ENCODE measurements at regions of chr2 and their contacts with region 1.

Region 1: GRCh38 chr2:229921892-229922445 is at the start of gene TRIP12:
- DNase-seq: peak; percentile 87 to 97 (median 95)
- ATAC-seq: peak; percentile 88
- H3K4me3 ChIP-seq: peak within 1 kb of the TSS; percentile 99
- H3K4me3 Mint-ChIP-seq: peak within 1 kb of the TSS; percentile 85 to 99 (median 96)
- H3K27ac ChIP-seq: peak within 1 kb of the TSS; percentile 98
- H3K27ac Mint-ChIP-seq: peak within 1 kb of the TSS; percentile 93 to 100 (median 98)
- H3K4me1 ChIP-seq: peaks cover 18 to 35% of the 10 kb centered on the region in 2 donors
- H3K4me1 Mint-ChIP-seq: peaks cover 30 to 62% (median 49%) of the 10 kb centered on the region in 7 donors
- H3K27me3 ChIP-seq: no peaks in the 10 kb centered on the region
- H3K27me3 Mint-ChIP-seq: no peaks in the 10 kb centered on the region
- total RNA-seq, gene TRIP12: 184 to 247 (median 231) TPM

Region 2: DNA sequence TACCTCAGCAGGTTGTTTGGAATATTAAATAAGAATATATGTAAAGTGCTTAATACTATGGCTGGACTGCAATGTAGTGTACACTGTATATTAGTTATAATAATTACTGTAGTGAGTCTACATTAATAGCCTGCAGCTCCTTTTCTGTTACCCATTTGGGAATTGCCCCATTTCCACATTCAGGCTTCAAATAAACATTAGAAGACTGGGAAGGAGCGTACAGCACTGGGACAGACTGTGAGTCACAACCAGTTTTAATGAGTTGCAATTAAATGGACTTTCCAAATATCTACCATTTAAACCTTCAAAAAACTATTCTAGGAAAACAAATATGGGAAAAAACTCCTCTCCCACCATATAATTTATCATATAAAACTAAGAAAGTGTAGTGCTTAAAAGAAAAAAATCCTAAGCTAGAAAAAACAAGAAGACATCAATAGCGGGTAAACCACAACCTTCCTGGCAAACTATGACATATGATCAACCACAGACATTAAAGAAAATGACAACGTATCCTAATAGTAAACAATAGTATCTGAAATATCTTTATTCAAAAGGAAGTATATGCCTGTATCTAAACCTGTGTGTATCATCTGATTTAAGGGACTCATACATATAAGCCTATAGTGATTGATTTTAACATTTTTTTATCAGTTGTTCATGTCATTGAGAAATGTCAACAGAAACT is 86.2 kb before region 1 on chr2:
- CTCF ChIA-PET with region 1: no interaction called
- POLR2A ChIA-PET with region 1: interaction called, 13 read pairs
- intact Hi-C with region 1: no loop called
- DNase-seq: peak in 7 of 9 donors; percentile 47 to 83 (median 75)
- ATAC-seq: peak; percentile 92
- H3K4me3 ChIP-seq: peak overlapping the region; percentile 17
- H3K4me3 Mint-ChIP-seq: peak overlapping the region; percentile 39 to 79 (median 68)
- H3K27ac ChIP-seq: peak overlapping the region; percentile 21
- H3K27ac Mint-ChIP-seq: peak overlapping the region; percentile 2 to 97 (median 90)
- H3K4me1 ChIP-seq: peaks cover 18 to 45% of the 10 kb centered on the region in 2 donors
- H3K4me1 Mint-ChIP-seq: peaks cover 23 to 84% (median 78%) of the 10 kb centered on the region in 7 donors
- H3K27me3 ChIP-seq: no peaks in the 10 kb centered on the region
- H3K27me3 Mint-ChIP-seq: no peaks in the 10 kb centered on the region

Region 3: DNA sequence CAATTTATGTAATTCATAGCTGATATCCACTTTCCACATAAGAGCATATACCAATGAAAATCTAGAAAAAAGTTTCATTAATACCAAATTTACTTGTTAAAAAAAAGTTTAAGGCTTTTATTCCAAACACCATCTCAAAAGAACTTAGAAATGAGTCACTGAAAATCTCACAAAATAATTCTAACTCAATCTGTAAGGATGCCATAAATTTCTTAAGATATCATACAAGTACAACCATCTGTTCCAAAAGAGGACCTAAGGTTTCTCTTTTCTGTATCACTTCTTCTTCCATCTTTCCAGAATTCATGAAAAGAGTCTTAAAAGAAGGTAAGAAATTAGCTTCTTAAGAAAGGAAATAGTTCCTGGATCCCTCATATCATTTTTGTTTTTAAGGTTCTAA is 60.5 kb before region 1 on chr2:
- CTCF ChIA-PET with region 1: no interaction called
- POLR2A ChIA-PET with region 1: no interaction called
- intact Hi-C with region 1: no loop called
- DNase-seq: no peak
- ATAC-seq: no peak
- H3K4me3 ChIP-seq: no peak overlapping the region
- H3K4me3 Mint-ChIP-seq: no peak overlapping the region
- H3K27ac ChIP-seq: no peak overlapping the region
- H3K27ac Mint-ChIP-seq: peak overlapping the region in 8 of 9 donors; percentile 5 to 93 (median 62)
- H3K4me1 ChIP-seq: peaks cover 7 to 12% of the 10 kb centered on the region in 2 donors
- H3K4me1 Mint-ChIP-seq: peaks cover 16 to 76% (median 65%) of the 10 kb centered on the region in 7 donors
- H3K27me3 ChIP-seq: no peaks in the 10 kb centered on the region
- H3K27me3 Mint-ChIP-seq: no peaks in the 10 kb centered on the region

Region 4: DNA sequence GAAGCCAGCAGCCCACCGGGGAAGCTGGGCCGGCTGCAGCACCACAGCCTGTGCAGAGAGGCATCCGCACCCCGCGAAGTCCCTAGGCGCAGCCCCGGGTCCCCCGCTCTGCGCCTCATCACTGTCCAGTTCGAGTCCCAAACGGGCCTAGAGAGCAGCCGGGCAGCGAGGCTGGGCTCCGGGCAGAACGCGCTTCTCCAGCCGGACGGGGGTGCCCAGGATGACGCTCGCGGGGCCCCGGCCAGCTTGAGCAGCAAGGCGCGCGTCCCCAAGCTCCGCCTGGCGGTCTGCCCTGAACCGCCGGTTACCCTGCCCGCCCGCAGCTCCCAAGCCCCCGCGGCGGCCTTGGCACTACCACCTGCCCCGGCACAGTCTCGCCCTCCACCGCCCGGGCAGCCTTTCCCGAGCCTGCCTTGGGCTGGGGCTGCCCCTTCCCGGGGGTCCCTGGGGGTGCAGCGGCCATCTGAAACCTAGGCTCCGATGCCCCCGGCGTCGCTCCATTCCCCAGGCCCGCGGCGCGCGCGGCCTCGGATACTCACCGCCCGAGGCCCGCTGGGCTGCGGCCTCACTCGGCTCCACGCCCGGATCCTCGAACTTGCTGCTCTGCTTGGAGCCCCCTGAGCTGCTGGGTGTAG is 146.2 kb after region 1 on chr2:
- CTCF ChIA-PET with region 1: no interaction called
- POLR2A ChIA-PET with region 1: no interaction called
- intact Hi-C with region 1: loop called in 1 of 2 experiments (anchors 2 kb)
- DNase-seq: peak; percentile 16 to 62 (median 38)
- ATAC-seq: peak; percentile 40
- H3K4me3 ChIP-seq: peak overlapping the region; percentile 62
- H3K4me3 Mint-ChIP-seq: peak overlapping the region; percentile 81 to 96 (median 90)
- H3K27ac ChIP-seq: no peak overlapping the region
- H3K27ac Mint-ChIP-seq: peak overlapping the region in 3 of 9 donors; percentile 69 to 80 (median 74)
- H3K4me1 ChIP-seq: peaks cover 0 to 7% of the 10 kb centered on the region in 2 donors
- H3K4me1 Mint-ChIP-seq: peaks cover 8 to 18% (median 12%) of the 10 kb centered on the region in 7 donors
- H3K27me3 ChIP-seq: no peaks in the 10 kb centered on the region
- H3K27me3 Mint-ChIP-seq: peaks cover 4 to 32% (median 5%) of the 10 kb centered on the region in 5 donors

Region 5: GRCh38 chr2:230602562-230603230 is 680.7 kb after region 1 on chr2:
- CTCF ChIA-PET with region 1: no interaction called
- POLR2A ChIA-PET with region 1: no interaction called
- intact Hi-C with region 1: loop called in 1 of 2 experiments (anchors 5 kb)
- DNase-seq: peak in 7 of 9 donors; percentile 51 to 79 (median 74)
- ATAC-seq: peak; percentile 90
- H3K4me3 ChIP-seq: peak overlapping the region; percentile 14
- H3K4me3 Mint-ChIP-seq: peak overlapping the region; percentile 66 to 90 (median 78)
- H3K27ac ChIP-seq: peak overlapping the region; percentile 64
- H3K27ac Mint-ChIP-seq: peak overlapping the region; percentile 93 to 99 (median 98)
- H3K4me1 ChIP-seq: peaks cover 35 to 38% of the 10 kb centered on the region in 2 donors
- H3K4me1 Mint-ChIP-seq: peaks cover 27 to 84% (median 71%) of the 10 kb centered on the region in 7 donors
- H3K27me3 ChIP-seq: no peaks in the 10 kb centered on the region
- H3K27me3 Mint-ChIP-seq: no peaks in the 10 kb centered on the region

Region 6: GRCh38 chr2:231463698-231464575 is 1542.0 kb after region 1 on chr2 and contains the start of gene NCL:
- CTCF ChIA-PET with region 1: no interaction called
- POLR2A ChIA-PET with region 1: no interaction called
- intact Hi-C with region 1: loop called in 1 of 2 experiments (anchors 2 kb)
- DNase-seq: peak; percentile 75 to 96 (median 91)
- ATAC-seq: peak; percentile 73
- H3K4me3 ChIP-seq: peak within 1 kb of the TSS; percentile 65
- H3K4me3 Mint-ChIP-seq: peak within 1 kb of the TSS; percentile 90 to 99 (median 95)
- H3K27ac ChIP-seq: peak within 1 kb of the TSS; percentile 96
- H3K27ac Mint-ChIP-seq: peak within 1 kb of the TSS; percentile 96 to 100 (median 100)
- H3K4me1 ChIP-seq: peaks cover 26 to 28% of the 10 kb centered on the region in 2 donors
- H3K4me1 Mint-ChIP-seq: peaks cover 39 to 65% (median 44%) of the 10 kb centered on the region in 7 donors
- H3K27me3 ChIP-seq: no peaks in the 10 kb centered on the region
- H3K27me3 Mint-ChIP-seq: no peaks in the 10 kb centered on the region
- total RNA-seq, gene NCL: 411 to 647 (median 426) TPM

Measured in naive thymus-derived CD4-positive, alpha-beta T cell (primary cell).